Common myeloid progenitor, CD34-positive (primary cell): ENCODE measurements at regions of chr14 and their contacts with region 1.

Region 1: GRCh38 chr14:22570132-22570949 is 18.7 kb downstream of the DAD1 start:
- DNase-seq: peak; percentile 96 to 99 (median 97)
- H3K4me3 ChIP-seq: peak overlapping the region in 1 of 7 experiments; percentile 28
- H3K27ac ChIP-seq: no peak overlapping the region
- H3K4me1 ChIP-seq: peaks cover 8 to 16% (median 12%) of the 10 kb centered on the region in 4 experiments
- H3K27me3 ChIP-seq: no peaks in the 10 kb centered on the region

Region 2: DNA sequence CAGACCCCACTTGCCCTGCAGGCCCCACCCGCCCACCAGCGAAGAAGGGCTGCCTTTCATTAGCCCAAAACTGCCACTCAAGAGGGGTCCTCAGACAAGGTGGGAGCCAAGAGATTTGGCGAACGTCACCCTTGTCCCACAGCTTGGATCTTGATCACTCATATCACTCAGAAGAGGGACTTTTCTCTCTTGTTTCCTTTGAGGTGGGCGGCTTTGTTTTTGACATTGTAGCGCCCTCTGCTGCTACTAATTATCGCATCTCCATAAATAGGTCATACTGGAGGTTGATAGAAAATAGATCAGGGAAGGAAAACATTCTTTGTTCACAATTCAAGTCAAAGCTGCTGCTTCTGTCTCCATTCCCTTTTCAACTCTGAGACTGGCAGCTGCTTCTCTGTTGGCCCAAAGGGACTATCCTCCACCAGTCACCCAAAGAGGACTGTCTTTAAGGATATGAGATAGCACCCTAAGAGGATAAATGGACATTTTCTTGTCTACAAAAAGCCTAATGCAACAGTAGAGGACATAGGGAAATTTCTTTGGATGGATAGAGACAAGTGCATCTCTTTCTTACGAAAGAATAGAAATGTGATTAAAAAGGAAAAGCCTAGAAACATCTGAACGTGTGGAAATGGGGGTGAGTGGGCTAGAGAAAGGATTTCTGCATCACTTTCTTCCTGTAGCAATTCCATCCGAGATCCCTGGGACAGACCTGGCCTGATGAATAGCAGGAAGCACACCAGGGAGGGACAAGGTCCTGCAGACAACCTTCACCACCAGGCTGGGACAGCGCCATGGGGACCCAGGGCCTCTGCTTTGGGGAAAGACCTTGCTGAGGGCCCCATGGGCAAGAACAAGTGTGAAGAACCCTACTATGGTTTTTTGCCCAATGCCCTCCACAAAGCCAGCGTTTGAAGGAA is 97.1 kb before region 1 on chr14:
- CTCF ChIA-PET with region 1: interaction called, 15 read pairs
- POLR2A ChIA-PET with region 1: no interaction called
- DNase-seq: peak; percentile 82 to 91 (median 87)
- H3K4me3 ChIP-seq: no peak overlapping the region
- H3K27ac ChIP-seq: no peak overlapping the region
- H3K4me1 ChIP-seq: peaks cover 7 to 52% (median 16%) of the 10 kb centered on the region in 4 experiments
- H3K27me3 ChIP-seq: no peaks in the 10 kb centered on the region

Region 3: GRCh38 chr14:22491683-22492621 is 78.4 kb before region 1 on chr14:
- CTCF ChIA-PET with region 1: no interaction called
- POLR2A ChIA-PET with region 1: no interaction called
- DNase-seq: no peak
- H3K4me3 ChIP-seq: no peak overlapping the region
- H3K27ac ChIP-seq: no peak overlapping the region
- H3K4me1 ChIP-seq: peaks cover 0 to 7% (median 3%) of the 10 kb centered on the region in 4 experiments
- H3K27me3 ChIP-seq: peaks cover 0 to 23% (median 7%) of the 10 kb centered on the region in 5 experiments

Region 4: DNA sequence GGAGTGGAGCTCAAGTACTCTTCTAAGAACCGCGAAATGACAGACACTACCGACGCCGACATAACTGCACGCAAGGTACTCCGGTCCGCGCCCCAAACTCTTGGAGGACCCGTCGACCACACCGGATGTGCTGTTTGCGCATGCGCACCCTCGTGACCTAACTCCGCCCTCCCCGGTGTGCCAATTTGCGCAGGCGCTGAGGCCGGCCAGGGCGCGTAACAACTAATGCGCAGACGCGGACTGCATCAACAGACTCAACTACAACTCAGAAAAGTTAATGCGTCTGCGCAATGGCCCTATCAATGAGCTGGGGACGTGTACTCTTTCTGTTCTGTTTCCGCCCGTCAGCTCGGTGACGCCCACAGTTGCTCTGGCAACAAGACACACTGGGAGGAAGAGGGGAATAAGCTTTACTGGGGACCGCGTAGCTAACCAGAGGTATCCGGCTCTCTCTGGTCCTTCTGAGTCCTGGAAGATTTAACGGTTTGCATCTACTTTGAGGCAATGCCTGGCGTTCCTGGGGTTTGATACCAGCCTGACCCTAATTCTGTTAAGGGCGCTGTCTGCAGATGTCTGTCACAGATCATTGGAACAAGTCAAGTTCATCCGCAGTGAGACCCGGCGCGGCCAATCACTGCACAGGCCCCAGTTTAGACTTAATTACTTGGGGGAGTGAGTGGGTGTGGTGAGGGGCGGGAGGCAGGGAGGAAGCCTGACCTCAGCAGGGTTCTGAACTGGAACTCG is 18.9 kb after region 1 on chr14 and contains the start of gene DAD1:
- CTCF ChIA-PET with region 1: interaction called, 48 read pairs
- POLR2A ChIA-PET with region 1: interaction called, 3 read pairs
- DNase-seq: peak; percentile 100
- H3K4me3 ChIP-seq: peak within 1 kb of the TSS; percentile 58 to 98 (median 94)
- H3K27ac ChIP-seq: peak within 1 kb of the TSS; percentile 93 to 94
- H3K4me1 ChIP-seq: peaks cover 14 to 36% (median 27%) of the 10 kb centered on the region in 4 experiments
- H3K27me3 ChIP-seq: no peaks in the 10 kb centered on the region

Region 5: GRCh38 chr14:22646570-22647254 is 76.4 kb after region 1 on chr14:
- CTCF ChIA-PET with region 1: interaction called, 65 read pairs
- POLR2A ChIA-PET with region 1: no interaction called
- DNase-seq: peak in 2 of 3 donors; percentile 17 to 21
- H3K4me3 ChIP-seq: no peak overlapping the region
- H3K27ac ChIP-seq: no peak overlapping the region
- H3K4me1 ChIP-seq: peaks cover 0 to 2% (median 0%) of the 10 kb centered on the region in 4 experiments
- H3K27me3 ChIP-seq: peaks cover 0 to 2% (median 0%) of the 10 kb centered on the region in 5 experiments

Region 6: GRCh38 chr14:22822571-22823098 is 252.3 kb after region 1 on chr14:
- CTCF ChIA-PET with region 1: interaction called, 10 read pairs
- POLR2A ChIA-PET with region 1: no interaction called
- DNase-seq: peak; percentile 70 to 74 (median 73)
- H3K4me3 ChIP-seq: peak overlapping the region in 6 of 7 experiments; percentile 20 to 62 (median 42)
- H3K27ac ChIP-seq: no peak overlapping the region
- H3K4me1 ChIP-seq: peaks cover 12 to 38% (median 36%) of the 10 kb centered on the region in 4 experiments
- H3K27me3 ChIP-seq: peaks cover 0 to 29% (median 2%) of the 10 kb centered on the region in 5 experiments

Region 7: GRCh38 chr14:22900081-22900799 is 329.9 kb after region 1 on chr14:
- CTCF ChIA-PET with region 1: interaction called, 16 read pairs
- POLR2A ChIA-PET with region 1: no interaction called
- DNase-seq: peak; percentile 72 to 84 (median 79)
- H3K4me3 ChIP-seq: no peak overlapping the region
- H3K27ac ChIP-seq: no peak overlapping the region
- H3K4me1 ChIP-seq: no peaks in the 10 kb centered on the region
- H3K27me3 ChIP-seq: peaks cover 0 to 2% (median 0%) of the 10 kb centered on the region in 5 experiments